Activated B cell treated with CpG ODN at 0.5 μM for 24 hours (primary cell): ENCODE measurements at regions of chr2 and their contacts with region 1.

Region 1: GRCh38 chr2:218659258-218659987 is at the starts of genes BCS1L and ZNF142:
- DNase-seq: peak; percentile 85
- ATAC-seq: peak; percentile 96
- H3K4me3 Mint-ChIP-seq: peak within 1 kb of the TSS; percentile 99
- H3K27ac Mint-ChIP-seq: peak within 1 kb of the TSS; percentile 93
- H3K4me1 Mint-ChIP-seq: peaks cover 31% of the 10 kb centered on the region
- H3K27me3 Mint-ChIP-seq: no peaks in the 10 kb centered on the region
- CTCF ChIP-seq: no peak
- total RNA-seq, gene BCS1L: 66.9 and 75.1 TPM in 2 replicates
- total RNA-seq, gene ZNF142: 44.9 and 63.6 TPM in 2 replicates

Region 2: GRCh38 chr2:218648088-218648786 is 11.2 kb before region 1 on chr2:
- CTCF ChIA-PET with region 1: interaction called, 15 read pairs
- POLR2A ChIA-PET with region 1: interaction called, 4 read pairs
- intact Hi-C with region 1: loop called (anchors 1 kb)
- DNase-seq: peak; percentile 36
- ATAC-seq: peak; percentile 88
- H3K4me3 Mint-ChIP-seq: no peak overlapping the region
- H3K27ac Mint-ChIP-seq: no peak overlapping the region
- H3K4me1 Mint-ChIP-seq: no peaks in the 10 kb centered on the region
- H3K27me3 Mint-ChIP-seq: no peaks in the 10 kb centered on the region
- CTCF ChIP-seq: no peak

Region 3: DNA sequence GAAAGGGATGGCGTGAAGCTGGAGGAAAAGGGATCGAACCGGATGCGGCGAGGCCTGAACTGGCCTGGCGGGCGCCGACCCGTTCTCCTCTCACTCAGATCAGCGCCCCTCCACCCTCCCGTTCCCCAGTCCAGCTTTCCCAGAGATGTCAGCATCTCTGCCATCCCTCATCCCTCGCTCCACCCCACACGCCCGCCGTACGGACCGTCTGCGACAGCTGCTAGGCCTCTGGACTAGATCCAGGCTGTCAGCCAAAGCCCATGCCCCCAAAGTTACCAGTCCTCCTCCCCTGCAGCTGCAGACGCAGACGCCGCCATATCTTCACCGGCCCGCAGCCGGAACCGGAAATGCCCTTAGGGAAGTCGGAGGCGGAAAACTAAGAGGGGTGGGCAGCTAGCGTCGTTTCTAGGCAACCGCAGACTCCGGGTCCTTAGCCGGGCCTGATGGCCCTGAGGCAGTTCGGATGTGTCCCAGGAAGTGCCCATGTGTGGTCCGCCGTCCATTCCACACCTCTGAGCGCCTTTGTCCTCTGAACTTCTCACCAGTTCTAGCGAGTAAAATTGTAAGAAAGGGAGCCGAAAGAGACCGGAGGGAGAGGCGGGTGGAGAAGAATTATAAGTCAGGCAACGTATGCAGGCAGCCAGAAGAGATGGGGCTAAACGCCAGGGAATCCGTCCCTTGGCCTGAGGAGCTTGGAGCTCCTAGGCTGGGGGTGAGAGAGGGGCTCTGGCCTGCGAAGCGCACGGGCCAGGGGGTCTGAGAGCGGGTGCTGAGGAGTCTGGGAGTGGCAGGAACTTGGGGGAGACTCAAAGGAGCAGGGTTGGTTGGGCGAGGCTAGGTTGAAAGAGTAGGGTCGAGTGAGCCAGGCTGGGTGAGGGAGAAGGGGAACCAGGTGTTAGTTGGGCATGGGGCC is 12.5 kb after region 1 on chr2 and contains the starts of genes RNF25 and STK36:
- CTCF ChIA-PET with region 1: interaction called, 10 read pairs
- POLR2A ChIA-PET with region 1: interaction called, 61 read pairs
- intact Hi-C with region 1: loop called (anchors 1 kb)
- DNase-seq: peak; percentile 66
- ATAC-seq: peak; percentile 95
- H3K4me3 Mint-ChIP-seq: peak within 1 kb of the TSS; percentile 99
- H3K27ac Mint-ChIP-seq: peak within 1 kb of the TSS; percentile 97
- H3K4me1 Mint-ChIP-seq: peaks cover 21% of the 10 kb centered on the region
- H3K27me3 Mint-ChIP-seq: no peaks in the 10 kb centered on the region
- CTCF ChIP-seq: no peak
- total RNA-seq, gene RNF25: 29.7 and 35.1 TPM in 2 replicates
- total RNA-seq, gene STK36: 24.2 and 29.2 TPM in 2 replicates

Region 4: DNA sequence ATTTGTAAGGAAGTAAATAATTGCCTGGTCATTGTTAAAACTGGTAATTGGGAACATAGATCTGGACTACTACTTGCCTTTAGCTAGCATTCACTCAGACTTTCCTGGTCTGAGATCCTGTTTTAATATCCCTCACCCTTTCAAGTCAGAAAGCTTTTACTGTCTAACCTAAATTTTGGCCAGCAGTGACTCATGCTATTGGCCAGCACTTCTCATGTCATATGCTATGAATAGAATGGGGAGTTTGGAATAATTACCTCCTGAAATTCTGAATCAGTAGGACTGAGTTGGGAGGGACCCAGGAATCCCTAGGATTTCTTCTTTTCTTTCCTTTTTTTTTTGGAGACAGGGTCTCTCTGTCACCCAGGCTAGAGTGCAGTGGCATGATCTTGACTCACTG is 31.8 kb after region 1 on chr2:
- CTCF ChIA-PET with region 1: interaction called, 10 read pairs
- POLR2A ChIA-PET with region 1: no interaction called
- intact Hi-C with region 1: no loop called
- DNase-seq: no peak
- ATAC-seq: no peak
- H3K4me3 Mint-ChIP-seq: no peak overlapping the region
- H3K27ac Mint-ChIP-seq: no peak overlapping the region
- H3K4me1 Mint-ChIP-seq: no peaks in the 10 kb centered on the region
- H3K27me3 Mint-ChIP-seq: no peaks in the 10 kb centered on the region
- CTCF ChIP-seq: no peak

Region 5: DNA sequence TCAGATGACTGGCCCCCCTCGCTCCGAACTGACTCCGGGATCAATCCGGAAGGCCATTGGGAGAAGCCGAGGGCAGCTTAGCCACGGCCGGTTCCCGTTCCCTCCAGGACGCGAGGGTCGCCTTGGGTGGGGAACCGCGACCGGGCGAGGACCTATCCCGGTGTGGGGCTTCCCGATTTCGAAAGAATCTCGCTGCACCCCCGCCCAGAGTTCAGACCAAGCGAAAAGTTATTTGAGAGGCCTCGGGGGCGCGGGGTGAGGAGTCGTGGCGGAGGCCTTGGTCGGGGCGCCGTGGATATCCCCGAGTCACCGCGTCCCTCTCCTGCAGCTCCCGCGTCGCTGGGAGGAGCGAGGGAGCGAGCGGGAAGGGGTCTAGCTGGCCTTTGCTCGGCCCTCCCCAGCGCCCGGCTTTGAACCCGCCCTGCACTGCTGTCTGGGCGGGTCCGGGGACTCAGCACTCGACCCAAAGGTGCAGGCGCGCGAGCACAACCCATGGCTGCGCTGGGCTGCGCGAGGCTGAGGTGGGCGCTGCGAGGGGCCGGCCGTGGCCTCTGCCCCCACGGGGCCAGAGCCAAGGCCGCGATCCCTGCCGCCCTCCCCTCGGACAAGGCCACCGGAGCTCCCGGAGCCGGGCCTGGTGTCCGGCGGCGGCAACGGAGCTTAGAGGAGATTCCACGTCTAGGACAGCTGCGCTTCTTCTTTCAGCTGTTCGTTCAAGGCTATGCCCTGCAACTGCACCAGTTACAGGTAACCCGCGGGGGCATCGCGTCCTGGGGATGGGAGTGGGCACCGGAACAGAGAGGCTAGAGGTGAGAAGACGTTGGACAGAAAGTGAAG is 122.5 kb after region 1 on chr2 and contains the start of gene CYP27A1:
- CTCF ChIA-PET with region 1: no interaction called
- POLR2A ChIA-PET with region 1: no interaction called
- intact Hi-C with region 1: no loop called
- DNase-seq: no peak
- ATAC-seq: no peak
- H3K4me3 Mint-ChIP-seq: no peak within 1 kb of the TSS
- H3K27ac Mint-ChIP-seq: no peak within 1 kb of the TSS
- H3K4me1 Mint-ChIP-seq: peaks cover 3% of the 10 kb centered on the region
- H3K27me3 Mint-ChIP-seq: peaks cover 54% of the 10 kb centered on the region
- CTCF ChIP-seq: no peak
- total RNA-seq, gene CYP27A1: 0.49 and 0.55 TPM in 2 replicates

Region 6: GRCh38 chr2:218898109-218898878 is 238.9 kb after region 1 on chr2:
- CTCF ChIA-PET with region 1: interaction called, 4 read pairs
- POLR2A ChIA-PET with region 1: interaction called, 5 read pairs
- intact Hi-C with region 1: loop called (anchors 1 kb)
- DNase-seq: peak; percentile 88
- ATAC-seq: peak; percentile 22
- H3K4me3 Mint-ChIP-seq: peak overlapping the region; percentile 85
- H3K27ac Mint-ChIP-seq: peak overlapping the region; percentile 84
- H3K4me1 Mint-ChIP-seq: peaks cover 47% of the 10 kb centered on the region
- H3K27me3 Mint-ChIP-seq: peaks cover 22% of the 10 kb centered on the region
- CTCF ChIP-seq: peak; percentile 97